Transverse colon (tissue), 4 donors: ENCODE measurements at regions of chr20 and their contacts with region 1.

Region 1: DNA sequence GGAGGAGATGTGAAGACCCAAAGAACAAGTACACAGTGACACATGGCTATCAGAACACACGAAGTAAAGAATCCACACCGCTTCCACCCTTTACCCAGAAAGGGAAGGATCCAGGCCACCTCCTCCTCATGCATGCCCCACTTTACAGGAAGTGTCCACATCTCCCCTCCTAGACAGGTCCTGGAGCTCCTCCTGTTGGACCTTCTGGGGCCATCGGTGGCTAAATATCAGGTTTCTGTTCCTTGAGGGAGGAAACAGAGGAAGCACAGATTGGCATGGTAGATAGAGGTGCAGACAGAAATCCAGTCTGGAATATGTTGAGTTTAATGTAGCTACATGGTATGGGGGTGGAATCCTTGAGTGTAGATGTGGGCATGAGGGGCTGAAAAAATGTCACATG is 10.9 kb downstream of the NINL start:
- DNase-seq: no peak
- H3K4me3 ChIP-seq: no peak overlapping the region
- H3K27ac ChIP-seq: no peak overlapping the region
- H3K4me1 ChIP-seq: peaks cover 0 to 5% (median 0%) of the 10 kb centered on the region in 4 donors
- H3K27me3 ChIP-seq: no peaks in the 10 kb centered on the region
- CTCF ChIP-seq: no peak
- EP300 ChIP-seq: no peak
- POLR2A ChIP-seq: no peak

Region 2: GRCh38 chr20:25470045-25470444 is 104.4 kb before region 1 on chr20:
- in situ Hi-C with region 1: loop called in 1 of 4 experiments (anchors 25 kb)
- intact Hi-C with region 1: no loop called
- DNase-seq: peak; percentile 49
- H3K4me3 ChIP-seq: no peak overlapping the region
- H3K27ac ChIP-seq: no peak overlapping the region
- H3K4me1 ChIP-seq: no peaks in the 10 kb centered on the region
- H3K27me3 ChIP-seq: no peaks in the 10 kb centered on the region
- CTCF ChIP-seq: peak; percentile 22 to 44 (median 37)
- EP300 ChIP-seq: no peak
- POLR2A ChIP-seq: no peak